Colonic mucosa (tissue), 4 donors: ENCODE measurements at regions of chr17 and their contacts with region 1.

Region 1: DNA sequence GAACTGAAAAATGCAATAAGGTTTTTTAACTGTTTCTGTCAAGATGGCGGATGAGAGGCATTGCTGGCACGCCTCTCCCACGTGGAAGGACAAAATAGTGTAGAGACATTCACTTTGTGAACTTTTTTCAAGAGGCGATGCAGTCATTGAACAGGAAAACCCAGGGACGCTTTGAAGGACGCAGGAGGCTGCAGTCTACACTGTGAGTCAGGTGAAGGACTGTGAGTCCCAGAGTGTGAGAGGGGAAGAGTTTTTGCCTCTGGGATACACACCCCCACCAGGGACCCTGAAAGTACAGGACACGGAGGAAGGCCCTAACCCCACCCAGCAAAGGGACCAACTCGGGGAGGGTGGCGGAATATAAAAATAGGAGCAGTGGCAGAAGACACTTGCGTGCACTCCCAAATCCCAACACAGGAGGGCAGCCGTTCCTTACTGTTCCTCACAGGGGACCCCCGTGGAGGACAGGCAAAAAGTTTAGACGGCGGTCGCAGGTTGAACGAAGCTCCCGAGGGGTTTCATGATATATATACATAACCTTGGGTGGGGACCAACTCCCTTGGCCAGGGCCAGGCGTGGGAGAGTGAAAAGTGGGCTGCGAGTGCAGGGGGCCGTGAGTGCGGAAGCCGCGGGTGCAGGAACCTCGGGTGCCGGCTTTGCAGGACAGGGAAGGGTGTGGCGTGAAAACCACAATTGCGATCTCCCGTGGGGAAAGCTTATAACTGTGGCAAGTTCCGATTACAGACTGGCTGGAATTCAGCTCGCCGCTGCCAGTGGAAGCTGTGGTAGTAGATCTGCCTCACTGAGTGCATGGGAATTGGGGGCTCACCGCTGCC is 82.0 kb upstream of the ALOX12 start:
- DNase-seq: peak; percentile 78
- H3K4me3 ChIP-seq: peak overlapping the region; percentile 14
- H3K27ac ChIP-seq: no peak overlapping the region
- H3K4me1 ChIP-seq: no peaks in the 10 kb centered on the region
- H3K27me3 ChIP-seq: no peaks in the 10 kb centered on the region
- CTCF ChIP-seq: peak; percentile 70

Region 2: GRCh38 chr17:7021993-7022778 is 108.4 kb after region 1 on chr17:
- intact Hi-C with region 1: loop called (anchors 5 kb)
- DNase-seq: peak; percentile 82
- H3K4me3 ChIP-seq: peak overlapping the region; percentile 16
- H3K27ac ChIP-seq: no peak overlapping the region
- H3K4me1 ChIP-seq: no peaks in the 10 kb centered on the region
- H3K27me3 ChIP-seq: no peaks in the 10 kb centered on the region
- CTCF ChIP-seq: peak; percentile 95